ENCODE measurements at regions of chr17 and their contacts with region 1.

Region 1: DNA sequence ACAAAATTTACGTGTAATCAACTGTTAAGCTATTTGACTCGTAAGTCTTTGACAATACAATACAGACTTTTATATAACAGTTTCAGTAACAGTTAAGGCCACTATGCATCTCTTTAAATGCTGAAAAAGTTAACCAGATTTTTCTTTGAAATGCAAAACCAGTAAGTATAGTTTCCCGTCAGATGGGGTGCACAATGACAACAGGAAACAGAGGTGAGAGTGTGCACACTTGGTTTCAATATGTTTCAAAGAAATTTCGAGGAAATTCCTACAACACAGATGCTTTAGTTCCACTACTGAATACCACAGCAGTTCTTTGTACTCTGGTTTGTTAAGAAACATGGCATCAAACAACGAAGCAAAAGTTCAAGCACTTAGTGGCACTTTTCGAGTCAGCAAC is 48.4 kb downstream of the RNF157 start:
- DNase-seq: peak; percentile 78
- ATAC-seq: peak; percentile 85
- H3K4me3 Mint-ChIP-seq: peak overlapping the region; percentile 73
- H3K27ac Mint-ChIP-seq: peak overlapping the region; percentile 97
- H3K4me1 Mint-ChIP-seq: peaks cover 89% of the 10 kb centered on the region
- H3K27me3 Mint-ChIP-seq: no peaks in the 10 kb centered on the region

Region 2: DNA sequence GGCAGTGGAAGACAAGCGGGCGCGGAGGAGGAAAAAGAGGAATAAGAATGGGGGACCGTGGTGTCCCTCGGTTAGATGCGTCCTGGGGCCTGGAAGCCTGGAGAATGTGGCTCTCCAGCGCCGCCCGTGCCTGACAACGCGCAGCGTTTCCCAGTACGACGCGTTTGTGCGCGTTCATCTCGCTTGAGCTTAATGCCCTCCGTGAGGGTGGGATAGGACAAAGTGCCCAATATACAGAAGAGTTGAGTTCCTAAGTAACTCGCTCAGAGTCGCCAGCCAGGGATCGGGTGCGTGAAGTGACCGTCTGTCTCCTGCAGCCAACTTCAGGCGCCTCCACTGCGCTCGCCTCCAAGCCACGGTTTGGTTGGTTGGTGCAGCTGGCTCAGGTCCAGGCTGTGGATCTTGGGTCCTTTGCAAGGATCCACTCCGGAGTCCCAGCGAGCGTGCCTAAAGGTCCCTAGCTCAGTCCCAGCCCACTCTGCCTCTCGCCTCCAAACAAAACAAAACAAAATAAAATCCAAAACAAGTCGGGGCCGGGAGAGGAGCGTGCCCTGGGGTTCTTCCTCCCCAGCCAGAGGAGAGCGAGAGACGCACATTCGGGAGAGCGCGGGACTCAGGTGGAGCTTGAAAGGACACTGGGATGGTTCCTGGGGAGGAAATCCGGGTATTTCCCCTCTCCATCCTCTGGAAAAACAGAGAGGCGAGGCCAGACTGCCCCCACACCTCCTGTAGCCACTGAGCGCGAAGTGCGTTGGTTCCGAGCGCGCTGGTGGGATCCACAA is 116.3 kb before region 1 on chr17:
- CTCF ChIA-PET with region 1: no interaction called
- POLR2A ChIA-PET with region 1: no interaction called
- DNase-seq: no peak
- ATAC-seq: no peak
- H3K4me3 Mint-ChIP-seq: no peak overlapping the region
- H3K27ac Mint-ChIP-seq: no peak overlapping the region
- H3K4me1 Mint-ChIP-seq: peaks cover 43% of the 10 kb centered on the region
- H3K27me3 Mint-ChIP-seq: peaks cover 54% of the 10 kb centered on the region

Region 3: DNA sequence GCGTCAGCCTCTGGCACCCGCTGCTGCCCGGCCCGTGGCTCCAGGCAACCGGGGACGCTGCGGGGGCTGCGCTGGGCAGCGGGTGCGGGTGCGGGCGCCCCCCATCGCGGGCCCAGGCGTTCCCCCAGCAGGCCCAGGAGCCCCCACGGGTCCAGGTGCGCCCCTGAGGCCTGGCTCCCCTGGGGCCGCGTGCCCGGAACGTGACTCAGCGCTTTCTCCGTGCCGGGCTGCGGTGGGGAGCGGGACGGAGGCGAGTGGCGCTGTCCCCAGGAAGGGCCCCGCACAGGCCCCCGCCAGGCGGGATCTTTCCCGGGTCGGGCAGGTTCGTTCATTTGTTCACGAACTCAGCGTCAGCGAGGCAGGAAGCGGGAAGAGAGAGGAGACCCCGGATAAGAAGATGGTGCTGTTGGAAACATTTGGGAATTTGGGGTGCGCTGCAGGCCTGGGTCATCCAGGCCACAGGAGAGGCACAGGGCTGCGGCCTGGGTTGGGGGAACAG is 69.9 kb before region 1 on chr17:
- CTCF ChIA-PET with region 1: interaction called, 13 read pairs
- POLR2A ChIA-PET with region 1: interaction called, 5 read pairs
- DNase-seq: no peak
- ATAC-seq: peak; percentile 31
- H3K4me3 Mint-ChIP-seq: peak overlapping the region; percentile 26
- H3K27ac Mint-ChIP-seq: peak overlapping the region; percentile 73
- H3K4me1 Mint-ChIP-seq: peaks cover 45% of the 10 kb centered on the region
- H3K27me3 Mint-ChIP-seq: no peaks in the 10 kb centered on the region

Region 4: GRCh38 chr17:76147211-76148014 is 44.5 kb before region 1 on chr17:
- CTCF ChIA-PET with region 1: interaction called, 6 read pairs
- POLR2A ChIA-PET with region 1: interaction called, 20 read pairs
- DNase-seq: no peak
- ATAC-seq: no peak
- H3K4me3 Mint-ChIP-seq: no peak overlapping the region
- H3K27ac Mint-ChIP-seq: peak overlapping the region; percentile 97
- H3K4me1 Mint-ChIP-seq: peaks cover 79% of the 10 kb centered on the region
- H3K27me3 Mint-ChIP-seq: no peaks in the 10 kb centered on the region

Region 5: GRCh38 chr17:76240461-76241203 is 48.7 kb after region 1 on chr17 and contains the start of gene RNF157:
- CTCF ChIA-PET with region 1: interaction called, 20 read pairs
- POLR2A ChIA-PET with region 1: interaction called, 66 read pairs
- DNase-seq: peak; percentile 66
- ATAC-seq: peak; percentile 90
- H3K4me3 Mint-ChIP-seq: peak within 1 kb of the TSS; percentile 90
- H3K27ac Mint-ChIP-seq: peak within 1 kb of the TSS; percentile 86
- H3K4me1 Mint-ChIP-seq: peaks cover 79% of the 10 kb centered on the region
- H3K27me3 Mint-ChIP-seq: no peaks in the 10 kb centered on the region
- total RNA-seq, gene RNF157: 150 to 165 TPM

Region 6: GRCh38 chr17:76252040-76252954 is 60.4 kb after region 1 on chr17:
- CTCF ChIA-PET with region 1: interaction called, 5 read pairs
- POLR2A ChIA-PET with region 1: interaction called, 49 read pairs
- DNase-seq: peak; percentile 65
- ATAC-seq: peak; percentile 72
- H3K4me3 Mint-ChIP-seq: peak overlapping the region; percentile 77
- H3K27ac Mint-ChIP-seq: peak overlapping the region; percentile 96
- H3K4me1 Mint-ChIP-seq: peaks cover 77% of the 10 kb centered on the region
- H3K27me3 Mint-ChIP-seq: no peaks in the 10 kb centered on the region

Region 7: DNA sequence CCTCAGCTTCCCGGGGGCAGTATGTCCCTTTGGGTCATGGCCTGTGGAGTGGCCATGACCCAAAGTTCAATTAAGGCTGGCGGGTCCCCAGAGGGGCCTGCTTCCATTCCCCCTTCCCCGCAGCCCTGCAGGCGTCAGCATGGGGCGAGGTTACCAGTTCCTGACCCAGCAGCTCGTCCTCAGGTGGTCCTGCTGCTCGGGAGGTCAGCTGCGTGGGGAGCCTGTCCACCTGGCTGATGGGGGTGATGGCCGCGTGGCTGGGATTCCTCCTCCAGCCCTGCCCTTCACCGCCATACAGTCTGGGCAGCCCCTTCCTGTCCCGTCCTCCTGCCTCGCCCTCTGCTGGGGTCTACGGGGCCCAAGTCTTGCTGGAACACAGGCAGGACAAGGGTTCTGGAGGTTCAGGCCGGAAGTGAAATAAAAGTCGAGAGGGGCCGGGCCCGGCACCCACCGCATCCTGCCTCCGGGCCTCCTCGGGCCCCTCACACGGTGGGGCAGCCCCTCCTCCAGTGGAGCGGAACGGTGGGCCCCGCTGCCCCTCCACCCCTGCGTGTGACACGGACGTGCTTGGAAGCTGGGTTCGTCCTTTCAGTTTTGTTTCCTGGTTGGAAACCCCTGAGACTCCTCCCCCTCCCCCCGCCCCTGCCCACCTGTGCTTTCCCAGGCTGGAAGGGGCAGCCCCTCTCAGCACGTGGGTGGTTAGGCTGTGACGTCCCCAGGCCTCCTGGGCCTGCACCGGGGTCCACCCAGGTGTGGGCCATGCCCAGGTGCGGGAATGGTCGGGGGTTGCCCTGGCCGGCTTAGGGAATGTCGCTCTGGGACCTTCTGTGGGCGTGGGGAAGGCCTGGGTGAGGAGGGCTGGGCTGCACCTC is 80.0 kb after region 1 on chr17:
- CTCF ChIA-PET with region 1: interaction called, 11 read pairs
- POLR2A ChIA-PET with region 1: interaction called, 722 read pairs
- DNase-seq: peak; percentile 90
- ATAC-seq: peak; percentile 39
- H3K4me3 Mint-ChIP-seq: peak overlapping the region; percentile 84
- H3K27ac Mint-ChIP-seq: peak overlapping the region; percentile 99
- H3K4me1 Mint-ChIP-seq: peaks cover 66% of the 10 kb centered on the region
- H3K27me3 Mint-ChIP-seq: no peaks in the 10 kb centered on the region

Region 8: GRCh38 chr17:76414334-76415295 is 222.7 kb after region 1 on chr17:
- CTCF ChIA-PET with region 1: no interaction called
- POLR2A ChIA-PET with region 1: no interaction called
- DNase-seq: no peak
- ATAC-seq: no peak
- H3K4me3 Mint-ChIP-seq: no peak overlapping the region
- H3K27ac Mint-ChIP-seq: no peak overlapping the region
- H3K4me1 Mint-ChIP-seq: no peaks in the 10 kb centered on the region
- H3K27me3 Mint-ChIP-seq: no peaks in the 10 kb centered on the region